Activated CD4-positive, alpha-beta memory T cell treated with anti-CD3 and anti-CD28 coated beads, Interleukin-2, amount 10 ng/mL, durations not matched to agents 7 days and 5 days (primary cell): ENCODE measurements at regions of chr3 and their contacts with region 1.

Region 1: GRCh38 chr3:125519678-125520589 is at the start of gene SNX4:
- DNase-seq: peak; percentile 90
- H3K4me3 Mint-ChIP-seq: peak within 1 kb of the TSS; percentile 91
- H3K27ac Mint-ChIP-seq: peak within 1 kb of the TSS; percentile 83
- H3K4me1 Mint-ChIP-seq: peaks cover 29% of the 10 kb centered on the region
- H3K27me3 Mint-ChIP-seq: no peaks in the 10 kb centered on the region
- total RNA-seq, gene SNX4: 29.3 to 34.1 TPM

Region 2: DNA sequence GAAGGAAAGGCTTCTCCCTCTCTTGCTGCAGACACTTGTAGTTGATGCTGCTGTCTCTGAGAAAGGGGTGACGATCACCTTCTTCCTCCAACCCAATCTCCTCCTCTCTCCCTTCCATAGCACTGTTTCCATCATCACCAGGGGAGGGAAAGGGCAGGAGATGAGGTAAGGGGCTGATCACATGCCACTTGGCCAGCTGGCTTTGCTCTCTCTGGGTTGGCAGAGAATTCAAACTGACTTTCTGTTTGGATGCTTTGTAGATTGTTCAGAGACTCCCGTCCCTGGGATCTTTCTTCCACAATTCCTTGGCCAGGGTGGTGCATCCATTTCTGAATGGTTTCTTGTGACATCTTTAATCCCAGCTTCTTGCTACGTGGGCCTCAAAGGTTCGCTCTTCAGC is 101.6 kb before region 1 on chr3:
- CTCF ChIA-PET with region 1: no interaction called
- POLR2A ChIA-PET with region 1: no interaction called
- DNase-seq: no peak
- H3K4me3 Mint-ChIP-seq: no peak overlapping the region
- H3K27ac Mint-ChIP-seq: no peak overlapping the region
- H3K4me1 Mint-ChIP-seq: no peaks in the 10 kb centered on the region
- H3K27me3 Mint-ChIP-seq: peaks cover 7% of the 10 kb centered on the region

Region 3: DNA sequence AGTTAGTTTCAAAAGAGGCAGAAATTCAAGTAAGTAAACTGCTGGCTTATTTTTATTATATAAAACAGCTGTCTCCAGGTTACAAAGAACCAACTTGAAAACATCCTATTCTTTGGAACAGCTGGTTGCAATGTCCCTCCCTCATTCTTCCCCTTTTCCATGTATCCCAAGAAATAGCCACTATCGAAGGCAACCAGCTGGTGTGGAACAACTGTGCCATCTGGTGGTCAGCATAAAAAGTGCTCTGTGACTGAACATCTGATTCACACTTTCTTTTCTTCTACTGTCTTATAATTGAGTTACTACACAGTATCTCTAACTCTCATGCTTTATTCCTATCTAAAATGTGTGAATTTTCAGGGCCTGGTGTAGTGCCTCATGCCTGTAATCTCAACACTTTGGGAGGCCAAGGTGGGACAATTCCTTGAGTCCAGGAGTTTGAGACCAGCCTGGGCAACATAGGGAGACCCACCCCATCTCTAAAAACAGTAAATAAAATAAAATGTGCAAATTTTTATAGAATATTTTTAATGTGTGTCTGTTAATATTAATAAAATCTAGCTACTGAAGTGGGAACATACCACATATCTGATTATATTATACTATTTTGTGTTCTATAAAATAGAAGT is 65.8 kb after region 1 on chr3:
- CTCF ChIA-PET with region 1: interaction called, 10 read pairs
- POLR2A ChIA-PET with region 1: interaction called, 3 read pairs
- DNase-seq: peak; percentile 48
- H3K4me3 Mint-ChIP-seq: no peak overlapping the region
- H3K27ac Mint-ChIP-seq: no peak overlapping the region
- H3K4me1 Mint-ChIP-seq: peaks cover 18% of the 10 kb centered on the region
- H3K27me3 Mint-ChIP-seq: no peaks in the 10 kb centered on the region

Region 4: DNA sequence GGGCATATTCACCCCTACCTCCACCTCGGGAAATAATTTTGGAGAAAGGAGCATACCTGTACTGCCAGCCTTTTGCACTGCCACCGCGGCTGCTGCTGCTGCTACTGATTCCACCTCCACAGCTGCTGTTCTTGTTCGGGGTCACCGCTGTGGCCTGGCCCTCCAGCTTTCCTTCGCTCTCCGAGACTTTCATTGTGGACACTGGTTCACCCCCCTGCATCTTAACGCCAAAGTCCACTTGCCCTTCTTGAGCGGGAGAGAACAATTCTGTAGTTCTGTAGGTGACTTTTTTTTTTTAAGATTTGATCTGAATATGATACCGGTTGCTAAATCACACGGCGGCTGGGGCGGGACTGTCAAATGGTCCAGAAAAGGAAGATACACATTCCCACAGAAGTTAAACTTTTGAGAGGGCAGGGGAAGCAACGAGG is 74.7 kb after region 1 on chr3:
- CTCF ChIA-PET with region 1: interaction called, 4 read pairs
- POLR2A ChIA-PET with region 1: interaction called, 15 read pairs
- DNase-seq: peak; percentile 21
- H3K4me3 Mint-ChIP-seq: peak overlapping the region; percentile 97
- H3K27ac Mint-ChIP-seq: peak overlapping the region; percentile 84
- H3K4me1 Mint-ChIP-seq: peaks cover 41% of the 10 kb centered on the region
- H3K27me3 Mint-ChIP-seq: no peaks in the 10 kb centered on the region